ENCODE measurements at regions of chr16 and their contacts with region 1.

Region 1: GRCh38 chr16:72921106-72921505 is 126.8 kb downstream of the ZFHX3 start:
- DNase-seq: peak in 1 of 3 donors; percentile 31
- H3K4me3 ChIP-seq: peak overlapping the region in 2 of 7 experiments; percentile 16 to 66
- H3K27ac ChIP-seq: no peak overlapping the region
- H3K4me1 ChIP-seq: peaks cover 0 to 30% (median 13%) of the 10 kb centered on the region in 4 experiments
- H3K27me3 ChIP-seq: no peaks in the 10 kb centered on the region

Region 2: DNA sequence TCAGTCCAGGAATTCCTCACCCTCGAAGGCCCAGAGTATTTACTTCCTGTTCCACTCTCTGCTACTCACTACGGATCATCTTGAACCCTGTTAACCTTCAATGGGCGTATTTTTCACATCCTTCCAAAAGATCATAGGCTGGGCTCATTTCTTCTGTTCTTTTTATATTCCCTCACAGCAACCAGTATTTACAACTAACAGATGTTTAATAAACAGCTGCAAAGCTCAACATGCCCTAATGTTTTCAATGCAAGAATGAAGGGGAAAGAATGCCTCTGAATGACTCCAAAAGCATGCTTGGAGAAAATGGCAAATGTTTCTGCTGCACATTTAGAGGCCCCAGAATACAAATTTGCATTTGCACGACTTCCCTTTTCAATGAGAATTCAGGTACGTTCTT is 48.1 kb before region 1 on chr16:
- CTCF ChIA-PET with region 1: no interaction called
- POLR2A ChIA-PET with region 1: no interaction called
- DNase-seq: no peak
- H3K4me3 ChIP-seq: no peak overlapping the region
- H3K27ac ChIP-seq: no peak overlapping the region
- H3K4me1 ChIP-seq: peaks cover 10 to 42% (median 37%) of the 10 kb centered on the region in 4 experiments
- H3K27me3 ChIP-seq: no peaks in the 10 kb centered on the region

Region 3: DNA sequence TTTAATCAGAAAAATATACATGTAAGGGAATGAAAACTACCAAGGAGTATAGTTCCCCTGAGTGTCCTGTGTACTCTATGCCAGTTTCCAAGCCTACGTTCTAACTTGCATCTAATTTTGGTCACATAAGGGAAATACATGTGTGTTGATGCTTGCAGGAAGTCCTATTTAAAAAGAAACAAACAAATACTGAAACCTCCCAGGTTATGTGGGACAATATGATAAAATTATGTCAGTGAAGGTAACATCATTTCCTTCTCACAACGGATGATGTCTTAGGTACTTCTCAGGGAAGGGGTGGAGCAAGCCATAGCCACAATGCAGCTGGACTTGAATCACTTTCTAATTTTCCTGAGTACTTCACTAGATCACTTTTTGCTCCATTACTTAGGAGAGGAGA is 10.9 kb after region 1 on chr16:
- CTCF ChIA-PET with region 1: interaction called, 10 read pairs
- POLR2A ChIA-PET with region 1: no interaction called
- DNase-seq: no peak
- H3K4me3 ChIP-seq: peak overlapping the region in 4 of 7 experiments; percentile 28 to 52 (median 44)
- H3K27ac ChIP-seq: peak overlapping the region; percentile 98 to 99
- H3K4me1 ChIP-seq: peaks cover 4 to 26% (median 16%) of the 10 kb centered on the region in 4 experiments
- H3K27me3 ChIP-seq: no peaks in the 10 kb centered on the region

Region 4: GRCh38 chr16:72963533-72964315 is 42.6 kb after region 1 on chr16:
- CTCF ChIA-PET with region 1: no interaction called
- POLR2A ChIA-PET with region 1: no interaction called
- DNase-seq: no peak
- H3K4me3 ChIP-seq: no peak overlapping the region
- H3K27ac ChIP-seq: no peak overlapping the region
- H3K4me1 ChIP-seq: no peaks in the 10 kb centered on the region
- H3K27me3 ChIP-seq: no peaks in the 10 kb centered on the region